HCT116 (cell line): ENCODE measurements at regions of chr13 and their contacts with region 1.

Region 1: DNA sequence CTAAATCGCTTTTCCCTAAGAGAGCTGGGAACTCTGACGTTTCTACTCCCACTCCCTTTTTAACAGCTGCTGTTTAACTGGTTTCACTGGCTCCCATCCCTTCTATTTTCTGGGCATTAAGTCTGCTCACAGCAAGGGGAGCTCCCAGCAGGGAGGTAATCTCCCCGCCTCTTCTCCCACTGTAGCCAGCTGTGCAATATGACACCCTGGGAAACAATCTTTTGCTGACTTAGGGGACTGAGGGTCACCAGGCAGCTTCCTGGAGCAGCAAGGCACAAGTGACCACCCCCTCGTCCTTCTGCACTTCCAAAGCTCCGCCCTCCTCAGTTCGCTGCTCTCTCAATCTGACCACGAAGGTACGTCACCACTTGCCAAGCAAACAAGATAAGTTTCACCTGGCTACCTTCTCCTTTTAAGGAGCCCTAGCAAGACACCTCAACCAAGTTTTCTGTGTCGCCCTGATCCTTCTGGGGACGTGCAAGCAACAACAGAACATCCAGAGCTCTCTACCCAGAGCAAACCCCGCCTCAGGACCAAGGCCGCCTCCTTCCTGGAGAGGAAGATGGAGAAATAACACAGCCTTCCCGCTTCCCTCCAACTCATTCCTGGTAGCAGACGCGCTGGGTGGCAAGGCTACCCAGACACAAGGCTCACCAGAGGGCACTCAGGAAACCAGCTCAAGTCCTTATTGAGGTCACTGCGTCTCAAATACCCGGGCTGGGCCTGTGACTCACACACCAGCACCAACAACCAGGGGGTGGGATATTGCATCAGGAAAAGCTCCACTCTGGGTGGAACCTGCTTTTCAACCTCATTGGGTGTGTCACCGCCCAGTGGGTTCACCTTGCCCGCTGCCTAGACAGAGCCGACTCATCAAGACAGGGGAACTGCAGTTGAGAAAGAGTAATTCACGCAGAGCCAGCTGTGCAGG is 92.4 kb downstream of the STK24 start:
- DNase-seq: peak; percentile 97
- ATAC-seq: peak; percentile 91
- H3K4me3 ChIP-seq: peak overlapping the region; percentile 25 to 46
- H3K27ac ChIP-seq: peak overlapping the region; percentile 73
- H3K4me1 ChIP-seq: peaks cover 36 to 83% of the 10 kb centered on the region in 2 experiments
- H3K27me3 ChIP-seq: no peaks in the 10 kb centered on the region
- CTCF ChIP-seq: 0 out of 6 replicates have a peak, but pooled peaks of 1 of the 3 experiments have one; percentile 3
- POLR2A ChIP-seq: no peak
- RAD21 ChIP-seq: no peak

Region 2: DNA sequence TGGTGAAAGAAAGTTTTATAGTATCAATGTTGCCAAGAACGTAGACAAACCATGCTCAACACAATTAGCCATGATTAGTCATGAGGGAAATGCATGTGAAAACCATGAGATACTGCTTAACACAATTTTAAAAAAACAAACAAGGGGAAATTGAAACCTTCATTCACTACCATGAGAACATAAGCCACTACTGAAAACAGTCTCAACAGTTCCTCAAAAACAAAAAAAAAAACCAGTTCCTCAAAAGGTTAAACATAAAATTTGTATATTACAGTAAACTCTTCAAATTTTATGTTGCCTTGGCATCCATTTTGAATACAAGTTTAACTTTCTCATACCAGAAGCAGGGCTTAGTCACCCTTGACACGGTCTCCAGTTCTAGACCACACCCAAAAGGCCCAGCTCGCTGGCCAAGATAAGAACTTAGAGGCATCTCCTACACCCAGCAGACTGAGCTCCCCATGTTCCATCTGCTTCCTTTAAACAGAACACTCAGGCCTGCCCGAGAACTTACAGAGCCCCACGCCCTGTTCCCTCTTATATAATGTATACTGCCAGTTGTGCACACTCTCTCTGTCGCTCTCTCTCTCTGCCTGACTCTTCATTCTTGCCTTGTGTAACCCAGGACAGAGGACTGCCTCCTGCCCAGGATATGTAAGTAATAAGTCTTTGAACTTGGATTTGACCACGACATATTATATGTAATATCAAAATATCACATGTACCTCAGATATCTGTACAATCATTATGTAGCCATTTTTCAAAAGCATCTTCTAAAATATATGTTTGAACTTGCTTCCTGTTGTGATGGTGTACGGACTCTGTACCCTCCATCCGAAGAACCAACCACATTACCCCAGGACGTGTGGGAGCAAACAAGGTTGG is 25.0 kb after region 1 on chr13:
- CTCF ChIA-PET with region 1: interaction called, 4 read pairs
- POLR2A ChIA-PET with region 1: interaction called, 23 read pairs
- RAD21 ChIA-PET with region 1: interaction called in 1 of 2 experiments, 7 read pairs
- intact Hi-C with region 1: loop called (anchors 2 kb)
- DNase-seq: peak; percentile 63
- ATAC-seq: peak; percentile 88
- H3K4me3 ChIP-seq: peak overlapping the region in 1 of 2 experiments; percentile 28; a peak in 2 of 4 replicates
- H3K27ac ChIP-seq: peak overlapping the region; percentile 5; the same call in 1 of the 2 replicates
- H3K4me1 ChIP-seq: peaks cover 39 to 49% of the 10 kb centered on the region in 2 experiments
- H3K27me3 ChIP-seq: no peaks in the 10 kb centered on the region
- CTCF ChIP-seq: no peak
- POLR2A ChIP-seq: no peak
- RAD21 ChIP-seq: no peak

Region 3: GRCh38 chr13:98570929-98571372 is 86.4 kb after region 1 on chr13:
- CTCF ChIA-PET with region 1: no interaction called
- POLR2A ChIA-PET with region 1: interaction called, 11 read pairs
- RAD21 ChIA-PET with region 1: interaction called in 1 of 2 experiments, 3 read pairs
- intact Hi-C with region 1: loop called (anchors 2 kb)
- DNase-seq: peak; percentile 83
- ATAC-seq: peak; percentile 76
- H3K4me3 ChIP-seq: peak overlapping the region; percentile 33 to 48
- H3K27ac ChIP-seq: peak overlapping the region; percentile 67
- H3K4me1 ChIP-seq: peaks cover 54 to 80% of the 10 kb centered on the region in 2 experiments
- H3K27me3 ChIP-seq: no peaks in the 10 kb centered on the region
- CTCF ChIP-seq: no peak
- POLR2A ChIP-seq: no peak
- RAD21 ChIP-seq: no peak